ENCODE measurements at regions of chr1 and their contacts with region 1.

Region 1: DNA sequence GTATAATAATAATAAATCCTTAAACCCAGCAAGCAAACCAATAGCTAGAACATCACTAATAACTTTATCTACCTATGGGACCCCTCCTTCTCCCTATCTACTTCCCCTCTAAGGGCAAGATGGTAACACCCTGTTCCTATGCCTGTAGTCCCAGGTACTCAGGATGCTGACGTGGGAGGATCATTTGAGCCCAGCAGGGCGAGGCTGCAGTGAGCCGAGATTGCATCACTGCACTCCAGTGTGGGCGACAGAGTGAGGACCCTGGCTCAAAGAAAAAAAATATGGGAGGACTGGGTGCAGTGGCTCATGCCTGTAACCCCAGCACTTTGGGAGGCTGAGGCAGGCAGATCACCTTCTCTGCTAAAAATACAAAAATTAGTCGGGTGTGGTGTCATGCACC is 143.1 kb upstream of the SLC45A1 start:
- DNase-seq: no peak
- ATAC-seq: peak in 1 of 2 donors; percentile 49

Region 2: DNA sequence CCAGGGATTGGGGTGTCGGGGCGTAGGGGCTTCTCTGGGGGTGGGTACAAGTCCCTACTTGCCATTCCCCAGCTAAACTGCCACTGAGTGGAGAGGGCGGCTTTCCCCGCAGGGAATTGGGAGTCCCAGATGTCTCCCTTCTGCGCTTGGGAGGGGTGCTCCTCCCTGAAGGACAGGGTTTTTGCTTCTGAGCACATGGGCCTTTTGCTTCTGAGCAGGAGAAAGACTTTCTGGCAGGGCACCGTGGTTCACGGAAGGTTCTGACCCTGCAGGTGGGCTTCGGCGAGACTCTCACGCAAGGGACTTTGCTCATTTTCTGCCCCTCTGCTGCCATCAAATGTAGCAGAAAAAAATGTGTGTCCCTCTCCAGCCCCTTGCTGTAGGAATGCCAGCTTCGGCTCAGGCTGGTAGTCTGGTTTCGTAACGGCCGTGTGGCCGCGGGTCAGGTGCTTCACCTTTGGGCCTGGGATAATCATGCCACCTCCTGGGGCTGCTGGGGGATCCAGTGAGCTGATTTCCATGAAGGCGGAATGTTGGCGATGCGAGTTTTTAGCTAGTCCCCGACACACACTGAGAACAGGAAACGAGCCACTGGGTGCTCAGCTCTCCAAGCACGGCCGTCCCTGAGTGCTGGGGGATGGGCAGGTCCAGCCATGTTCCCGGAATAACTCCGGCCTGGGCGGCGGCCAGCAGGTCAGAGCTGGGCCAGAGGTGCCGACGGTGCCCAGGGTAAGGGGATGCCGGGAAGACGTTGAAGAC is 1025.5 kb before region 1 on chr1:
- intact Hi-C with region 1: no loop called
- DNase-seq: peak; percentile 72
- ATAC-seq: peak; percentile 91 to 93

Region 3: GRCh38 chr1:8763888-8764287 is 589.1 kb after region 1 on chr1:
- intact Hi-C with region 1: loop called in 1 of 2 experiments (anchors 5 kb)
- DNase-seq: no peak
- ATAC-seq: peak in 1 of 2 donors; percentile 36